Heart right ventricle (tissue), 16 donors: ENCODE measurements at regions of chrX and their contacts with region 1.

Region 1: GRCh38 chrX:54439967-54440871 is at the start of gene TSR2:
- DNase-seq: peak; percentile 74 to 81
- ATAC-seq: peak; percentile 95 to 99 (median 99)
- H3K4me3 ChIP-seq: peak within 1 kb of the TSS; percentile 62 to 95 (median 84)
- H3K27ac ChIP-seq: peak within 1 kb of the TSS in 7 of 10 donors; percentile 24 to 81 (median 66)
- H3K4me1 ChIP-seq: peaks cover 0 to 19% (median 12%) of the 10 kb centered on the region in 9 donors
- H3K27me3 ChIP-seq: peaks cover 0 to 11% (median 0%) of the 10 kb centered on the region in 7 donors
- CTCF ChIP-seq: peak in 1 of 9 donors; percentile 14
- total RNA-seq, gene TSR2: 34.3 to 48.6 (median 40.0) TPM

Region 2: DNA sequence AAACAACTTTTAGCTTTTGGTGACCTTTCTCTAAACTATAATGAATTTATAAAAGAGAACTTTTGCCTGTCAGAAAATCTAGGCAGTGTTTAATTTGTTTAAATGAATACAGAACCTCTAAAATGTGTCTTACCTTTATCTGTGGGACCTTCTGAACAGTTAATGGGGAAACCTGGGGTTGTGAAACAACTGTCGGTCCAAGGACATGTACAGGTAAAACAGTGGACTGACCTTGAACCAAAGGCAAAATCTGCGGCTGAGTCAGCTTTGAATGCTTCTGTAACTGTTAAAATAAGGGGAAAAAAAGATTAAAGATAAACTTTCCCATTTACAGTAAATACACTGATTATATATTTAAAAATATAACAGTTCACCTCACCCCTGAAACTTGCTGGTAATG is 147.5 kb before region 1 on chrX:
- intact Hi-C with region 1: no loop called
- DNase-seq: no peak
- ATAC-seq: no peak
- H3K4me3 ChIP-seq: no peak overlapping the region
- H3K27ac ChIP-seq: no peak overlapping the region
- H3K4me1 ChIP-seq: no peaks in the 10 kb centered on the region
- H3K27me3 ChIP-seq: peaks cover 0 to 31% (median 0%) of the 10 kb centered on the region in 7 donors
- CTCF ChIP-seq: no peak

Region 3: DNA sequence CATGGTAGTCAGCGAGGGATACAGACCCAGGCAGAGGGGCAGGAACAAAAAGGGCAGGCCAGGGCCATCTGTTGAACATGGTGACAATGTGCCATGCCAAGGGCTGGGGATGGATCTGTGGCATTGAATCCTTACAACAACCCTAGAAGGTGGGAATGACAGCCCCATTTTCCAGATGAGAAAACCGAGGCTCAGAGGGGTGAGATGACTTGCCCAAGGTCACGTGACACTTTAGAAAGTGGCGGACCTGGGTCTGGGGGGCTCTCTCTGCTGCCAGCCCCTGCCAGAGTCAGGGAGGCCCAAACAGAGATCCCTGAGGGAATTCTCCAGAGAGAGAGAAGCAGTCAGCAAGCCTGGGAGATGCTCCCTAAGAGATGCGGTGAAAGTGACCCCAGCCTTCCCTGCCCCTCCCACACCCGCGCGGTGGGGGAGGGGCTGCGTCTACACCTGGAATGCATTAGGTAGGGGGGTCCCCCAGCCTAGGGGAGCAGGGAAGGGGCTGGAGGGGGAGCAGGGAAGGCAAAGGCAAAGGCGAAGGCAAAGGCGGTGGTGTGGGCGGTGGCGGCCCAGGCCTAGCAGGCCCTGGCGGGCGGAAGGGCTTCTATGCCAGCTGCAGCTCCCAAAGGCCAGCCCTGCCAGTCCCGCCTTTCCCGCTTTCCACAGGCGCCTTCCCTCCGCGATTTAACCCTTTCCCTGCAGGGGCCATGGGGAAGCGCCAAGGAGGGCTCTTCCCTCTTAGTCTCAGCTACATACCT is 42.8 kb after region 1 on chrX:
- intact Hi-C with region 1: loop called in 1 of 10 experiments (anchors 2 kb)
- DNase-seq: peak in 1 of 2 donors; percentile 27
- ATAC-seq: peak in 5 of 8 donors; percentile 4 to 53 (median 33)
- H3K4me3 ChIP-seq: peak overlapping the region in 1 of 10 donors; percentile 2
- H3K27ac ChIP-seq: peak overlapping the region; percentile 16 to 81 (median 62)
- H3K4me1 ChIP-seq: peaks cover 0 to 45% (median 17%) of the 10 kb centered on the region in 9 donors
- H3K27me3 ChIP-seq: peaks cover 0 to 4% (median 0%) of the 10 kb centered on the region in 7 donors
- CTCF ChIP-seq: no peak

Region 4: GRCh38 chrX:54495814-54496516 is 55.7 kb after region 1 on chrX and contains the start of gene FGD1:
- intact Hi-C with region 1: loop called in 1 of 10 experiments (anchors 10 kb)
- DNase-seq: peak; percentile 70 to 79
- ATAC-seq: peak; percentile 85 to 96 (median 93)
- H3K4me3 ChIP-seq: peak within 1 kb of the TSS; percentile 41 to 76 (median 66)
- H3K27ac ChIP-seq: peak within 1 kb of the TSS in 9 of 10 donors; percentile 52 to 78 (median 71)
- H3K4me1 ChIP-seq: peaks cover 0 to 15% (median 0%) of the 10 kb centered on the region in 9 donors
- H3K27me3 ChIP-seq: peaks cover 0 to 50% (median 0%) of the 10 kb centered on the region in 7 donors
- CTCF ChIP-seq: no peak
- total RNA-seq, gene FGD1: 4.4 to 6.6 (median 5.3) TPM

Region 5: DNA sequence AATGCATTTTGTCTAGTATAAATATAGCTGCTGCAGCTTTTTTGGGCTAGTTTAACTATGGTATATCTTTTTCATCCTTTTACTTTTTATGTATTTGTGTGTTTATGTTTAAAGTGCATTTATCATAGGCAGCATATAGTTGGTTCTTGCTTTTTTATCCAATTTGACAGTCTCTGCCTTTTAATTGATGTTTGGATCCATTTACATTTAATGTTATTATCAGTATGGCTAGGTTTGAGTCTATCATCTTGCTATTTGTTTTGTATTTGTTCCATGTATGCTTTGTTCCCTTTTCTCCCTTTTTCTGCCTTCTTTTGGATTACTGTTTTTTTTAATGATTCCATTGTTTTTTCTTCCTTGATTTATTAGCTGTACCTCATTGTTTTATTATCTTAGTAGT is 130.1 kb after region 1 on chrX:
- intact Hi-C with region 1: no loop called
- DNase-seq: no peak
- ATAC-seq: no peak
- H3K4me3 ChIP-seq: no peak overlapping the region
- H3K27ac ChIP-seq: no peak overlapping the region
- H3K4me1 ChIP-seq: no peaks in the 10 kb centered on the region
- H3K27me3 ChIP-seq: no peaks in the 10 kb centered on the region
- CTCF ChIP-seq: no peak